Activated CD8-positive, alpha-beta T cell treated with anti-CD3 and anti-CD28 coated beads for 36 hours (primary cell): ENCODE measurements at regions of chr16 and their contacts with region 1.

Region 1: GRCh38 chr16:30844671-30845449 is 49.0 kb downstream of the BCL7C start:
- DNase-seq: peak; percentile 83
- ATAC-seq: peak; percentile 97
- H3K4me3 Mint-ChIP-seq: peak overlapping the region; percentile 9
- H3K27ac Mint-ChIP-seq: peak overlapping the region; percentile 51
- H3K4me1 Mint-ChIP-seq: peaks cover 13% of the 10 kb centered on the region
- H3K27me3 Mint-ChIP-seq: no peaks in the 10 kb centered on the region
- CTCF ChIP-seq: peak; percentile 89

Region 2: DNA sequence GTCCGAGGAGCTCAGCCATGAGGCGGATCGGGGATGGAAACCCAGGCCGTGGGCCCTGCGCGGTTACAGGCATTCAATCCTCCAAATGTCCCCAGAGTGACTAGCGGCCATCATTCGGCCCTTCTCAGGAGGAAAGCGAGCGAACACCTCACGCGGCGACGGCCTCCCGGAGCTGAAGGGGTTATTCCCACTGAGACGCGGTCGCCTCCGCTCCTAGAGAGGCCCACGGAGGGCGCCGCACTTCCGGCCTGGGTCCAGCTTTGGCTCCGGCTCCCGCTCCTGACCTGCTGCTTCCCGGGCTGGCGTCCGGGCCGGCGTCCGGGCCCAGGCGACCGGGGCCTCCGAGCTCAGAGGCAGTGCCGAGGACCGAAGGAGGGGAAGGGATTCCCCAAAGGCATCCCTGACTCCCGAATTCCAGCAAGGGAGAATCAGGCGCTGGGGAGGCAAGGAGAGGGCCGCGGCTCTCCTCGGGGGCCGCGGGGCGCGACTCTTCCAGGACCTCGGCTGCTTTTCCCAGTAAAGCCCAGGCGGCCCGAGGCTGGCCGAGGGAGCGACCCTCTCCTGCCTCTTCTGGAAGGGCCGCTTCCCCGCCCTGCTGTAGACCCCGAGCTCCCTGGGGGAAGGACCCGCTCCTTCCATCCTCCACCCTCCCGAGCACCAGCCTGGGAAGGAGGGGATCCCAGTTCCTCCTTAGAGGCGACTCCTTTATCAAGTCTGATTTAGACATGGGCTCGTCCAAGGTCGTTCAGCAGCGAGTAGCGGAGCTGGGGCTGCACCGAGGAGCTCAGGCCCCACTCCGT is 39.3 kb before region 1 on chr16:
- CTCF ChIA-PET with region 1: interaction called, 21 read pairs
- POLR2A ChIA-PET with region 1: no interaction called
- intact Hi-C with region 1: no loop called
- DNase-seq: peak; percentile 53
- ATAC-seq: peak; percentile 63
- H3K4me3 Mint-ChIP-seq: peak overlapping the region; percentile 63
- H3K27ac Mint-ChIP-seq: peak overlapping the region; percentile 66
- H3K4me1 Mint-ChIP-seq: peaks cover 18% of the 10 kb centered on the region
- H3K27me3 Mint-ChIP-seq: peaks cover 3% of the 10 kb centered on the region
- CTCF ChIP-seq: no peak

Region 3: DNA sequence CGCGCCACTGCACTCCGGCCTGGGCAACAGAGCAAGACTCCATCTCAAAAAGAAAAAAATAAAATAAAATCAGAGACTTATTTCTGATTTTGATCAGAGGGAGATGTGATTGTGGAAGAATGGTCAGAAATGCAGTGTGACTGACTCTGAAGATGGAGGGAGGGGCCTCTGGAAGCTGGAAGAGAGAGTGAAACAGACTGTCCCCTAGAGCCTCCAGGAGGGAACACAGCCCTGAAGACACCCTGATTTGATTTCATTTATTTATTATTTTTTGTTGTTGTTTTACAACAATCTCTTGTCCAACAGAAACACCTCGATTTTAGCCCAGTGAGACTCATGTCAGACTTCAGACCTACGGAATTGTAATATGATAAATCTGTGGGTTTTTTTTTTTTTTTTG is 22.9 kb after region 1 on chr16:
- CTCF ChIA-PET with region 1: interaction called, 13 read pairs
- POLR2A ChIA-PET with region 1: interaction called, 3 read pairs
- intact Hi-C with region 1: no loop called
- DNase-seq: no peak
- ATAC-seq: peak; percentile 45
- H3K4me3 Mint-ChIP-seq: no peak overlapping the region
- H3K27ac Mint-ChIP-seq: no peak overlapping the region
- H3K4me1 Mint-ChIP-seq: peaks cover 8% of the 10 kb centered on the region
- H3K27me3 Mint-ChIP-seq: no peaks in the 10 kb centered on the region
- CTCF ChIP-seq: no peak

Region 4: DNA sequence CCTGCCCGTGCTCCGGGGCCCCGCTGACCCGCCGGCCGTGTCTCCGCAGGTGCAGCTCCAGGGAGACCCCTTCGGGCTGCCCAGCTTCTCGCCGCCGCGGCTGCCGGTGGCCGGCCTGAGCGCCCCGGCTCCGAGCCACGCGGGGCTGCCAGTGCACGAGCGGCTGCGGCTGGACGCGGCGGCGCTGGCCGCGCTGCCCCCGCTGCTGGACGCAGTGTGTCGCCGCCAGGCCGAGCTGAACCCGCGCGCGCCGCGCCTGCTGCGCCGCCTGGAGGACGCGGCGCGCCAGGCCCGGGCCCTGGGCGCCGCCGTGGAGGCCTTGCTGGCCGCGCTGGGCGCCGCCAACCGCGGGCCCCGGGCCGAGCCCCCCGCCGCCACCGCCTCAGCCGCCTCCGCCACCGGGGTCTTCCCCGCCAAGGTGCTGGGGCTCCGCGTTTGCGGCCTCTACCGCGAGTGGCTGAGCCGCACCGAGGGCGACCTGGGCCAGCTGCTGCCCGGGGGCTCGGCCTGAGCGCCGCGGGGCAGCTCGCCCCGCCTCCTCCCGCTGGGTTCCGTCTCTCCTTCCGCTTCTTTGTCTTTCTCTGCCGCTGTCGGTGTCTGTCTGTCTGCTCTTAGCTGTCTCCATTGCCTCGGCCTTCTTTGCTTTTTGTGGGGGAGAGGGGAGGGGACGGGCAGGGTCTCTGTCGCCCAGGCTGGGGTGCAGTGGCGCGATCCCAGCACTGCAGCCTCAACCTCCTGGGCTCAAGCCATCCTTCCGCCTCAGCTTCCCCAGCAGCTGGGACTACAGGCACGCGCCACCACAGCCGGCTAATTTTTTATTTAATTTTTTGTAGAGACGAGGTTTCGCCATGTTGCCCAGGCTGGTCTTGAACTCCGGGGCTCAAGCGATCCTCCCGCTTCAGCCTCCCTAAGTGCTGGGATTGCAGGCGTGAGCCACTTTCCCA is 57.4 kb after region 1 on chr16:
- CTCF ChIA-PET with region 1: interaction called, 120 read pairs
- POLR2A ChIA-PET with region 1: interaction called, 6 read pairs
- intact Hi-C with region 1: no loop called
- DNase-seq: peak; percentile 62
- ATAC-seq: peak; percentile 77
- H3K4me3 Mint-ChIP-seq: peak overlapping the region; percentile 87
- H3K27ac Mint-ChIP-seq: peak overlapping the region; percentile 99
- H3K4me1 Mint-ChIP-seq: peaks cover 23% of the 10 kb centered on the region
- H3K27me3 Mint-ChIP-seq: no peaks in the 10 kb centered on the region
- CTCF ChIP-seq: peak; percentile 17

Region 5: DNA sequence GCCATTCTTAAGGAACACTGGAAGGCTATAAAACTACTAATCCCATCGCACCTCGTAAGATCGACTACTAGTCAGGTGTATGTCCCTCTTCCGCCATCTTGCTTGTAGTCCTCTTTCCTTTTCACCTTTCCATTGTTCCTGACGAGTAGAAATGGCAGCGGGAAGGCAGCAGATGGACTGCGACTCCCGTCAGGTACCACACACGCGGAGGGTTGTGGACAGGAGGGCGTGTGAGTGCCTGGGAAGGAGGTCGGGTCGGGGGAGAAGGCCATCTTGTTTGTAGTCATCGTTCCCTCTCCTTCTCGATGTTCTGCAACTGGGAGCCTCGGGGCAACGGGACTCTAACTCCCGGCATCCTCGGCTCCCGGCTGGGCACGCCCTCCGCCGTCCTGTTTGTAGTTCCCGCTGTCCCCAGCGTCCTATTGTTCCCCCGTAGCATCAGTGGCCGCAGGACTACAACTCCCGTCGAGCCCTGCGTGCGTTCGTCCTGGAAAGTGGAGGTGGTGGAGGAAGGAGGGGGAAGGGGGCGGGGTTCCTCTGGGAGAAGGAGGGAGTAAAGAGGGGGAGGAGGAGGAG is 78.2 kb after region 1 on chr16:
- CTCF ChIA-PET with region 1: interaction called, 82 read pairs
- POLR2A ChIA-PET with region 1: no interaction called
- intact Hi-C with region 1: loop called (anchors 1 kb)
- DNase-seq: peak; percentile 98
- ATAC-seq: peak; percentile 74
- H3K4me3 Mint-ChIP-seq: peak overlapping the region; percentile 99
- H3K27ac Mint-ChIP-seq: peak overlapping the region; percentile 100
- H3K4me1 Mint-ChIP-seq: peaks cover 20% of the 10 kb centered on the region
- H3K27me3 Mint-ChIP-seq: no peaks in the 10 kb centered on the region
- CTCF ChIP-seq: no peak

Region 6: GRCh38 chr16:30948667-30949649 is 104.1 kb after region 1 on chr16 and contains the start of gene ORAI3:
- CTCF ChIA-PET with region 1: interaction called, 10 read pairs
- POLR2A ChIA-PET with region 1: no interaction called
- intact Hi-C with region 1: no loop called
- DNase-seq: peak; percentile 57
- ATAC-seq: peak; percentile 35
- H3K4me3 Mint-ChIP-seq: peak within 1 kb of the TSS; percentile 90
- H3K27ac Mint-ChIP-seq: peak within 1 kb of the TSS; percentile 84
- H3K4me1 Mint-ChIP-seq: peaks cover 21% of the 10 kb centered on the region
- H3K27me3 Mint-ChIP-seq: no peaks in the 10 kb centered on the region
- CTCF ChIP-seq: no peak
- total RNA-seq, gene ORAI3: 7.6 to 10.9 TPM